Activated CD8-positive, alpha-beta memory T cell treated with anti-CD3 and anti-CD28 coated beads, Interleukin-2, amount 10 ng/mL, durations not matched to agents 7 days and 5 days (primary cell): ENCODE measurements at regions of chr10 and their contacts with region 1.

Region 1: DNA sequence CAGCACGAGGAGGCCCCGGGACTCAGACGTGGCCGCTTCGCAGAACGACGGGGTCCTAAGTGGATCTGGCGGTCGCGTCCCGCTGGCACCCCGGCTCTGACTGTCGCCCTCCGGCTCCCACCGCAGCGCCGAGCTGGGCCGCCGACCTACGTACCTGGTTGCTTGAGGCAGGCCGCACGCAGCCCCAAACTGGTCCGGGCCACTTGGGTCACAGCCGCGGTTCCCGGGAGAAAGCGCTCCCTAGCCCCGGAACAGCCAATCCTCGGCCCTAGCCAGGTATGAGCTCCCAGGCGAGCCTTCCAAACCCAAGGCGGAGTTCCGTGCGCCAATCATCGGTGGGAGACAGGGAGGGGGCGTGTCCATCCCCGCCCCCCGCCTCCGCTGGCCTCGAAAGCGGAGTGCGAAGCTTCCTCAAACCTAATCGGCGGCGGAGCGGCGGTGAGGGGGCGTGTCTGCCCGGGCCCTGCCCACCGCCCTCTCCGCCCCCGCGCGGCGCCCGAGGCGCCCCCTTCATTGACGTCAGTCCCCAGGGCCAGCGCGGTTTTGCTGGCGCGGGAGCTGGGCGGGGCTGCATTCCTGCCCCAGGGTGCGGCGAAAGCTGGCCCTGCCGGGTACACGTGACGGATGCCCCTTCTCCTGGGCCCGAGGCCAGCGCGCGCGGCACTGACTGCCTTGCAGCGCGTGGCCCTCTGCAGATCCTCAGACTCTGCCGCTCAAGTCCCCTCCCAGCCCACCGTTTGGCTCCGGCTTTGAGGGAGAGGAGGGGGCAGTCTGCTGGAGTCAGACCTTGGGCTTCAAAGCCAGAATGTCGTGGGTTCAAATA is at the start of gene AVPI1:
- DNase-seq: peak; percentile 96
- ATAC-seq: peak; percentile 92
- H3K4me3 Mint-ChIP-seq: peak within 1 kb of the TSS; percentile 80
- H3K27ac Mint-ChIP-seq: peak within 1 kb of the TSS; percentile 67
- H3K4me1 Mint-ChIP-seq: peaks cover 16% of the 10 kb centered on the region
- H3K27me3 Mint-ChIP-seq: no peaks in the 10 kb centered on the region
- total RNA-seq, gene AVPI1: 1.8 to 1.9 TPM

Region 2: GRCh38 chr10:97676770-97677581 is 10.2 kb before region 1 on chr10:
- CTCF ChIA-PET with region 1: interaction called, 51 read pairs
- DNase-seq: peak; percentile 55
- ATAC-seq: peak; percentile 86
- H3K4me3 Mint-ChIP-seq: no peak overlapping the region
- H3K27ac Mint-ChIP-seq: no peak overlapping the region
- H3K4me1 Mint-ChIP-seq: peaks cover 23% of the 10 kb centered on the region
- H3K27me3 Mint-ChIP-seq: no peaks in the 10 kb centered on the region

Region 3: DNA sequence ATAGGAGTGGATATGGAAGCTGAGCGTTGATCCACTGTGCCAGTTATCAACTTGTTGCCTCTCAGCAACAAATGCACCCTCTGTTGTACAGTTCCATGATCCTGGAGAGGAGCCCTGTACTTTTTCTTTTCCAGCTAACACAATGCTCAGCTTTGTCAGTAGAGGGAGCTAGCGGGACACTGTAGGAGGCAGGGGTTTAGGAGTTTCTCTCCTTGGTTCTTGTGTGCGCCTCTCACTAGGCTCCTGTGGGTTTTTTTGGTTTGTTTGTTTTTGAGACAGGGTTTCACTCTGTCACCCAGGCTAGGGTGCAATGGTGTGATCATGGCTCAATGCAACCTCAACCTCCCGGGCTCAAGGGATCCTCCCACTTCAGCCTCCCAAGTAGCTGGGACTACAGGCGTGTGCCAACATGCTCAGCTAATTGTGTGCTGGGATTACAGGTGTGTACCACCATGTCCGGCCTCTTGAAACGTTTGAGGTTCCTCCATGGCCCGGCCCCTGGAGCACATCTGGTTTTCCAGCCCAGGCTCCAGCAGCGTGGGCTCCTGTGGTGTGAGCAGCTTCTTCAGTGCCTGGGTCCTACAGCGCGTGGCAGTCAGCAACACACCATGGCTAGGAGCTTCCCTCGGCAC is 14.4 kb after region 1 on chr10:
- CTCF ChIA-PET with region 1: interaction called, 51 read pairs
- DNase-seq: peak; percentile 68
- ATAC-seq: peak; percentile 96
- H3K4me3 Mint-ChIP-seq: no peak overlapping the region
- H3K27ac Mint-ChIP-seq: no peak overlapping the region
- H3K4me1 Mint-ChIP-seq: peaks cover 8% of the 10 kb centered on the region
- H3K27me3 Mint-ChIP-seq: peaks cover 21% of the 10 kb centered on the region

Region 4: DNA sequence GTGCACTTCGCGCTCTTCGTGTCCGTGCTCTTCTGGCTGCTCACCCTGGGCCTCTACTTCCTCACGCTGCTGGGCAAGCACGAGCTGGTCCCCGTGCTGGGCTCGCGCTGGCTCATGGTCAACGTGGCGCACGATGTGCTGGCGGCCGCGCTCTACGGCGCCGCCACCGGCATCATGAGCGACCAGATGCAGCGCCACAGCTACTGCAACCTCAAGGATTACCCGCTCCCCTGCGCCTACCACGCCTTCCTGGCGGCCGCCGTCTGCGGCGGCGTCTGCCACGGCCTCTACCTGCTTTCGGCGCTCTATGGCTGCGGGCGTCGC is 26.8 kb after region 1 on chr10:
- CTCF ChIA-PET with region 1: interaction called, 22 read pairs
- DNase-seq: peak; percentile 68
- ATAC-seq: peak; percentile 83
- H3K4me3 Mint-ChIP-seq: peak overlapping the region; percentile 81
- H3K27ac Mint-ChIP-seq: peak overlapping the region; percentile 78
- H3K4me1 Mint-ChIP-seq: peaks cover 11% of the 10 kb centered on the region
- H3K27me3 Mint-ChIP-seq: peaks cover 45% of the 10 kb centered on the region

Region 5: GRCh38 chr10:97731346-97732051 is 44.3 kb after region 1 on chr10:
- CTCF ChIA-PET with region 1: interaction called, 40 read pairs
- DNase-seq: peak; percentile 63
- ATAC-seq: peak; percentile 63
- H3K4me3 Mint-ChIP-seq: no peak overlapping the region
- H3K27ac Mint-ChIP-seq: no peak overlapping the region
- H3K4me1 Mint-ChIP-seq: peaks cover 10% of the 10 kb centered on the region
- H3K27me3 Mint-ChIP-seq: peaks cover 5% of the 10 kb centered on the region

Region 6: DNA sequence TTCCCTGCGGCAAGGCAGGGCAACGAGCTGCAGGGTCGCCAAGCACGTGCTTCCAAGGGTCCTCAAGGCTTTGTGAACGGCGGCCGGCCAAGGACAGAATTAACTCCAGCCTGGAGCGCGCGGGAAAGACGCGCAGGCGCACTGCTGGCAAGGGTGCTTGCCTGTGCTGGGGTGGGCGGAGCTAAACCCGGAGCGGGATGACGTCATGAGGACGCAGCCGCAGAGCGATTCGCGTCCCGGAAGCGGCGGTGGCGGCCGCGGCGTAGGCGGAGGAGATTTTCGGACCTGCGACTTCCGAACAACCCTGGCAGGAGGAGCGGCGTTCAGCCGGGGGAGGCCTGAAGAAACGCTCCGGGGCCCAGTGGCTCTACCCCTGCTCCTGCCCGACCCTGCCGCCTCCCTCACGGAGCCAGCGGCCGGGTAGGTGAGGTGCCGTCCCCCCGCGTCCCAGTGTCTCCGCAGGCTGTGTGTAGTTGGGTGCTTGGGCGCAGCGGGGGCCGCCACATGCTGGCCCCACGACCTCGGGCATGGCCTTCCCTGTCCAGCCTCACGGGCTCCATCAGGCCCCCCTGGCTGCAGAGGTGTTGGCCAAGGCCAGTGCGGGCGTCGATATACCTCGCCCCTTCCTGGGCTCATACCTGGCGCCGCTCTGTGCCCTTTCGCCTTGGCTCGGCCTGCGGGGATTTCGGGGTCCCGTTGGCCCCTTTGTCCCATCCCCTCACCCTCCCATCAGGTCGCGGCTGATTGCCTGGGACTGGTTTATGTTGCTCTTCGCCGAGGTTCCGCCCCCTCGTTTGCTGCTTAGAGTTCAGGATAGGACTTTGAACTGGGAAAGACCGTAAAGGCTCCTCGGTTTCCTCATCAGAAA is 50.0 kb after region 1 on chr10 and contains the start of gene ZFYVE27:
- CTCF ChIA-PET with region 1: interaction called, 40 read pairs
- DNase-seq: peak; percentile 97
- ATAC-seq: peak; percentile 89
- H3K4me3 Mint-ChIP-seq: peak within 1 kb of the TSS; percentile 86
- H3K27ac Mint-ChIP-seq: peak within 1 kb of the TSS; percentile 89
- H3K4me1 Mint-ChIP-seq: peaks cover 36% of the 10 kb centered on the region
- H3K27me3 Mint-ChIP-seq: peaks cover 4% of the 10 kb centered on the region
- total RNA-seq, gene ZFYVE27: 31.4 to 32.8 TPM